Activated CD4-positive, alpha-beta T cell treated with anti-CD3 and anti-CD28 coated beads for 36 hours (primary cell): ENCODE measurements at regions of chr10 and their contacts with region 1.

Region 1: GRCh38 chr10:96129387-96130325 is at the start of gene ZNF518A:
- DNase-seq: peak; percentile 93
- ATAC-seq: peak; percentile 88
- H3K4me3 Mint-ChIP-seq: peak within 1 kb of the TSS; percentile 83
- H3K27ac Mint-ChIP-seq: peak within 1 kb of the TSS; percentile 99
- H3K4me1 Mint-ChIP-seq: peaks cover 20% of the 10 kb centered on the region
- H3K27me3 Mint-ChIP-seq: peaks cover 26% of the 10 kb centered on the region
- total RNA-seq, gene ZNF518A: 13.9 to 14.2 TPM

Region 2: DNA sequence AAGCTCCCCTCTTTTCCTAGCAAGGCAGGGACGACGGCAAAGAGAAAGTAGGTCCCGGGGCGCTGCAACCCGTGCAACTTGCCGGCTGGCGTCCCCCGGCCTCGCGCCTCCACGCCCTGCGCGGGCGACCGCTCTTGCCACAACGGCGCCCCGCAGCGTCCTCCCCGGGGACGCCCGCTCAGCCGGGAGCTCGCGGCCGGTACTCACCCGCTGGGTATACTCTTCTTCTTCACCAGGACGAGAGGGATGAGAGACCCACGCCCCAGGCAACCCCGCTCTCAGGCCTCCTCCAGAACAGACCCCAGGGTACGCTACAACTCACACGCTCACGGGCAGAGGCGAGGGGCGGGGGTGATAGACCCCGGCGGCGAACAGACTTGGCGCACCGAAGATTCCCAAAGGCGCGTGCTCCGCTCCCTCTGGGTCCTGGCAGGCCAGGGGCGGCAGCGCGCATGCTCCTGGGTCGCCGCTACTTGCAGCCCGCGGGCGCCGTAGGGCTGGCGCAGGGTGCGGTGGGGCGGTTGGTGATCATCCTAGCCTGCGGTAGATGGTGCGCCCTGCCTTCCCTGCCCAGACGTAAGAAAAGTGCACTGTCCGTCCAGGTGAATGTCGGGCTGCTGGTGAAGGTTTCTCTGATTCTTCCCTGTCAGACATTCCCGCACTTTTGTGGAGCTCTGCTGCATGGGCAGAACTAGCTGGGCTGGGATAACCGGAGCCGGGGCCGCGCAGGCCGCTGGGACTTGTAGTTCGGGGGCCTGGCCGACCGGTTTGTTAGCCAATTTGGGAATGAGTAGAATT is 222.0 kb before region 1 on chr10 and contains the start of gene CC2D2B:
- CTCF ChIA-PET with region 1: no interaction called
- POLR2A ChIA-PET with region 1: interaction called, 3 read pairs
- intact Hi-C with region 1: loop called in 1 of 2 experiments (anchors 2 kb)
- DNase-seq: peak; percentile 85
- ATAC-seq: peak; percentile 94
- H3K4me3 Mint-ChIP-seq: peak within 1 kb of the TSS; percentile 88
- H3K27ac Mint-ChIP-seq: peak within 1 kb of the TSS; percentile 96
- H3K4me1 Mint-ChIP-seq: peaks cover 9% of the 10 kb centered on the region
- H3K27me3 Mint-ChIP-seq: peaks cover 2% of the 10 kb centered on the region
- total RNA-seq, gene CC2D2B: 0.23 TPM in 1 of 2 experiments, not detected in the other

Region 3: DNA sequence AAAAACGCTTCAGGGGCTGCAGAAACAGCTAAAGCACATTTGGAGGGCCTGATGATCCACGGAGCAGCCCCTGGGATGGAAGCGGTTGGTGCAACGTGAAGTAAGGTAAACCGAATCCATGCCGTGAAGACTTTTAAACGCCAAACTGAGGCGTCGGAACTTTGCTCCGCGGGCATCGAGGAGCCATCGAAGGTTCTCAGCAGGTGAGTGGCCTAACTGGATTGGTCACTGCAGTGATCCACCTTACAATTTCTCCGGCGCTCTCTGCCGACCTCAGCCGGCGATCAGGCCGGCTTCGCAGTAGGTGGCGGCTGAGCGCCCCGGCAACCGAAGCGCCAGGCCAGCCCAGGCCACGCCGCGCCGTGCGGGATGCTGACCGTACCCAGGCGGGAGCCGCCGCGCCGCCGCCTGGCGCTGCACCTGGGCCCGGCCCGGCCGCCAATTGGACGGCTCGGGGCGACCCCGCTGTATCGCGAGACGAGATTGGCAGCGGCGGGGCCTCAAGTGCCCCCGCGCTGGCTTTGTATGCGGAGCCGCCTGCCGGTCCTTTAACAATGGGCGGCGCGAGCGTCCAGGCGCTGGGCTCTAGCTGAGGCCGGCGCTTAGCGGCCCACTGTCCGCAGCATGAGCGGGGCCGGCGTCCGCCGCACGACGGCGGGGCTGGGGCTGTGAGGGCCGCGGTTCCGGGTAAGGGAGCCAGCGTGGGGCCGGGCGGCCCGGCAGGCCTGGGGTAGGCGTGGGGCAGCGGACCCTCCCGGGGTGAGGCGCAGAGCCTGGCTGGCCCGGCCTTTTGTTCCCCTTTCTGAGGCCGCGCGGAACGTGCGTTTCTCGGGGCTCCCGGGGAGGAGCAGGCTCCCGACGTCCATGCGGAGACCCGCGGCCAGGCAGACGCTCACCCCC is 86.4 kb before region 1 on chr10 and contains the start of gene CCNJ:
- CTCF ChIA-PET with region 1: no interaction called
- POLR2A ChIA-PET with region 1: interaction called, 6 read pairs
- intact Hi-C with region 1: loop called (anchors 1 kb)
- DNase-seq: peak; percentile 90
- ATAC-seq: peak; percentile 93
- H3K4me3 Mint-ChIP-seq: peak within 1 kb of the TSS; percentile 93
- H3K27ac Mint-ChIP-seq: peak within 1 kb of the TSS; percentile 79
- H3K4me1 Mint-ChIP-seq: peaks cover 39% of the 10 kb centered on the region
- H3K27me3 Mint-ChIP-seq: no peaks in the 10 kb centered on the region
- total RNA-seq, gene CCNJ: 4.4 to 4.5 TPM

Region 4: DNA sequence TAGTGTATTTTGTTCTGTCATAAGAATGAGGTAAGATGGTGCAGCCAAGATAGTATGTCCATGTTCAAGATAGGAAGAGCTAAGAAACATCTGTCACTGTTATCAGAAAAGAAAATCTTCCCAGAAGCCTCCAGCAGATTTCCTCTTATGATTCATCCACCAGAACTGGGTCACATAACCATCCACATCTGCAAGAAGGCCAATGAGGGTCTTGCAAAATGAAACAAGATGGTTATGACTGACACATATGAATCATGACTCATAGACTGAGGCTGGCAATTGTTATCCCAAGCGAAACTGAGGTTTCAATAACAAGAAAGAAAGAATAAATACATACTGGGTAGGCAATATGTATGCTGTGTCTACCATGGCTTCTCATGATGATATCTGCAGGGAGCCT is 55.9 kb before region 1 on chr10:
- CTCF ChIA-PET with region 1: no interaction called
- POLR2A ChIA-PET with region 1: interaction called, 4 read pairs
- intact Hi-C with region 1: loop called in 1 of 2 experiments (anchors 1 kb)
- DNase-seq: peak; percentile 15
- ATAC-seq: peak; percentile 99
- H3K4me3 Mint-ChIP-seq: no peak overlapping the region
- H3K27ac Mint-ChIP-seq: peak overlapping the region; percentile 75
- H3K4me1 Mint-ChIP-seq: peaks cover 20% of the 10 kb centered on the region
- H3K27me3 Mint-ChIP-seq: no peaks in the 10 kb centered on the region

Region 5: GRCh38 chr10:96222441-96222840 is 92.8 kb after region 1 on chr10:
- CTCF ChIA-PET with region 1: no interaction called
- POLR2A ChIA-PET with region 1: no interaction called
- intact Hi-C with region 1: no loop called
- DNase-seq: no peak
- ATAC-seq: no peak
- H3K4me3 Mint-ChIP-seq: no peak overlapping the region
- H3K27ac Mint-ChIP-seq: no peak overlapping the region
- H3K4me1 Mint-ChIP-seq: no peaks in the 10 kb centered on the region
- H3K27me3 Mint-ChIP-seq: no peaks in the 10 kb centered on the region